PC-3 (cell line): ENCODE measurements at regions of chr6 and their contacts with region 1.

Region 1: GRCh38 chr6:75296811-75297779 is 12.5 kb upstream of the TMEM30A start:
- DNase-seq: peak; percentile 61
- ATAC-seq: peak; percentile 77
- H3K4me3 ChIP-seq: no peak overlapping the region
- H3K27ac ChIP-seq: no peak overlapping the region
- H3K4me1 ChIP-seq: no peaks in the 10 kb centered on the region
- H3K27me3 ChIP-seq: no peaks in the 10 kb centered on the region
- CTCF ChIP-seq: peak; percentile 74

Region 2: DNA sequence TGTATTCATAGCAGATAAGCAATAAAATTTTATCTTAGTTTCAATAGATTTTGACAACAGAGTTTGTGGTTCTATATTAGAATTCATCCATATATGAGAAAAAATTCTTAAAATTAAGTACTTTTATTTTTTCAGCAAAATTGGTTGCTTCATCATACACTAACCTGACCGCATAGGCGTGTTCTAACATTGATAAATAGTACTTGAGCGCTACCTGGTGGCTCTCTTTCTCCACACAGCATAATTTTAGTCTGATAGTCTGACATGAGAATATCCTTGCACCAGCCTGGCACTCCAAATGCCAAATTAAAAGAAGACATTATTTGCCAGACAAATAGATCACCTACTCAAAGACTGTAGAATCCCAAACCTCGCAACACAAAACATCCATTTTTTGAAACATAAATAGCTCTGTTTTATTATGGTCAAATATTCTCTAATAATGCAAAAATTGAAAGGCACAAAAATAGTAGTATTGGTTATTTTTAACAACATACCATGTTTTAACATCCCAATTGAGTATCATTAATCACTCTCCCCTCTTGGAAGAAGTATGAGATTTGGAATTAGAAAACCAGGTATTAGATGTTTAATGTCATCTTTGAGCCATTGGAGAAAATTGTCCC is 229.5 kb after region 1 on chr6:
- CTCF ChIA-PET with region 1: interaction called, 3 read pairs
- POLR2A ChIA-PET with region 1: no interaction called
- intact Hi-C with region 1: loop called (anchors 1 kb)
- DNase-seq: peak; percentile 82
- ATAC-seq: peak; percentile 68
- H3K4me3 ChIP-seq: no peak overlapping the region
- H3K27ac ChIP-seq: no peak overlapping the region
- H3K4me1 ChIP-seq: peaks cover 5% of the 10 kb centered on the region; the same call in 1 of the 2 replicates
- H3K27me3 ChIP-seq: no peaks in the 10 kb centered on the region
- CTCF ChIP-seq: peak; percentile 72